HepG2 (cell line): ENCODE measurements at regions of chr7 and their contacts with region 1.

Region 1: DNA sequence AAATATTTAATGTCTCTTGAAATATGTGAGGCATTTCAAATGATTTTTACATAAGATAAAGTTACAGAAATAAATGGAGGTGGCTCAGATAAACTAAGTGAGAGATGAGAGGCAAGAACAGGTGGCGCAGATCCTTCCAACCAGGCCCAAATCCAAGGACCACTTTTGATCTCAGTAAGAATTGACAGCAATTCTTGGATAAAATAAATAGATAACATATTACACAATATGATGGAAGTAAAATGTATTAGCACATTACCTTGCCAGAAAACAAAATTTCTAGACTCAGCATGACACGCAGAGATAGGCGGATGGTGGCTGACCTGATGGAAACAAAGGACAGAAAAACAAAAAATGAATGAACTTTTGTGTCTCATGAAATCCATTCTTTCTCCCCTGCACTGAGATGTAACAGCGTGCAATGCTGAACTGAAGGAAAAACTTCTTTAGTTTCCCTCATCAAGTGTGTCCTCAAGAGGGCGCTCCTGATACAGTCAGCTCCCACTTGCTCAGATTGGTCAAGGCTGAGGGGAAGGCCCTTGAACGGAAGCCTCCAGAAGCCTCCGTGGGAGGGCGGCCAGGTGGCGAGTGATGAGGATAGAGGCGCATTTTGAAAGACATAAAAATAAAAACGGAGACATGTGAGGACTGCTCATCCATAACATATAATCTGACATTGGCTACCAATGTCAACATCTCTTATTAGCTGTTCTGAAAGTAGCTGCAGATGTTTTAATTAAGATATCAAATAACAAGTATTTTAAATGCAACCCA is 62.8 kb upstream of the GSDME start:
- DNase-seq: peak; percentile 74
- ATAC-seq: peak; percentile 94
- H3K4me3 ChIP-seq: no peak overlapping the region
- H3K27ac ChIP-seq: no peak overlapping the region
- H3K4me1 ChIP-seq: peaks cover 23% of the 10 kb centered on the region
- H3K27me3 ChIP-seq: no peaks in the 10 kb centered on the region
- CTCF ChIP-seq: peak; percentile 92
- EP300 ChIP-seq: no peak
- POLR2A ChIP-seq: no peak
- RAD21 ChIP-seq: peak; percentile 80

Region 2: GRCh38 chr7:24858108-24858977 is 38.2 kb after region 1 on chr7:
- CTCF ChIA-PET with region 1: interaction called, 7 read pairs
- POLR2A ChIA-PET with region 1: no interaction called
- in situ Hi-C with region 1: no loop called
- intact Hi-C with region 1: loop called (anchors 1 kb)
- DNase-seq: peak; percentile 53
- ATAC-seq: peak; percentile 83
- H3K4me3 ChIP-seq: no peak overlapping the region
- H3K27ac ChIP-seq: peak overlapping the region; percentile 29
- H3K4me1 ChIP-seq: peaks cover 17% of the 10 kb centered on the region
- H3K27me3 ChIP-seq: no peaks in the 10 kb centered on the region
- CTCF ChIP-seq: peak; percentile 58
- EP300 ChIP-seq: no peak
- POLR2A ChIP-seq: no peak
- RAD21 ChIP-seq: no peak

Region 3: DNA sequence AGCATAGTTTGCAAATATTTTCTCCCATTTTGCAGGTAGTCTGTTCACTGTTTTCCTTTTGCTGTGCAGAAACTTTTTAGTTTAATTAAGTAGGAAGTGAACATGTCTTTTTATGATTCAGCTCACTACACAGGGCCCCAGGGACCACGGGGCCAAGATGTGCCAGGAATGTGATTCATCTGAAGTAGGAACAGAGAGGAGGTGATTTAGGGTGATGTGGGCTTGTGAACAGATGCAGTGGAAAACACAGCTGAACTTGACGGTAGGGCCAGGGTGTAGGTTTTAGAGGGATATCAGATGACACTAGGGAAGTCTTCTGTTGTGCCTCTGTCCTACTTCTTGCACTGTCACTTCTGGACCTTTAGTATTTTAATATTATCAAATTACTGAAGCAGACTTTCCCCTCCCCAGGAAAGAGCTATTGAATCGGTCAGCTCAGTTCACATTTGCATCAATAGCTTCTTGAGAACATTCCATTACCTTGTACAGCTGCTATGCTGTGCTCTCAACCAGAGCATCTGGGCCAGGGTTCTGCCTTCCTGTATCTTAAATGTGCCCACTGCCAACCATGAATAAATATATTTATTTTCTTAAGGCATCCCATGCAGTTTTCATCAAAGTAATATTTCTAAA is 63.0 kb after region 1 on chr7:
- CTCF ChIA-PET with region 1: interaction called, 19 read pairs
- POLR2A ChIA-PET with region 1: no interaction called
- in situ Hi-C with region 1: loop called (anchors 5 kb)
- intact Hi-C with region 1: loop called (anchors 1 kb)
- DNase-seq: no peak
- ATAC-seq: no peak
- H3K4me3 ChIP-seq: no peak overlapping the region
- H3K27ac ChIP-seq: no peak overlapping the region
- H3K4me1 ChIP-seq: no peaks in the 10 kb centered on the region
- H3K27me3 ChIP-seq: no peaks in the 10 kb centered on the region
- CTCF ChIP-seq: no peak
- EP300 ChIP-seq: no peak
- POLR2A ChIP-seq: no peak
- RAD21 ChIP-seq: no peak

Region 4: GRCh38 chr7:24926623-24927524 is 106.8 kb after region 1 on chr7:
- CTCF ChIA-PET with region 1: no interaction called
- POLR2A ChIA-PET with region 1: no interaction called
- in situ Hi-C with region 1: no loop called
- intact Hi-C with region 1: no loop called
- DNase-seq: no peak
- ATAC-seq: no peak
- H3K4me3 ChIP-seq: no peak overlapping the region
- H3K27ac ChIP-seq: no peak overlapping the region
- H3K4me1 ChIP-seq: peaks cover 19% of the 10 kb centered on the region
- H3K27me3 ChIP-seq: no peaks in the 10 kb centered on the region
- CTCF ChIP-seq: no peak
- EP300 ChIP-seq: no peak
- POLR2A ChIP-seq: no peak
- RAD21 ChIP-seq: no peak

Region 5: GRCh38 chr7:24971333-24972165 is 151.4 kb after region 1 on chr7:
- CTCF ChIA-PET with region 1: no interaction called
- POLR2A ChIA-PET with region 1: no interaction called
- in situ Hi-C with region 1: no loop called
- intact Hi-C with region 1: loop called (anchors 1 kb)
- DNase-seq: peak; percentile 80
- ATAC-seq: peak; percentile 95
- H3K4me3 ChIP-seq: no peak overlapping the region
- H3K27ac ChIP-seq: peak overlapping the region; percentile 60
- H3K4me1 ChIP-seq: peaks cover 72% of the 10 kb centered on the region
- H3K27me3 ChIP-seq: no peaks in the 10 kb centered on the region
- CTCF ChIP-seq: no peak
- EP300 ChIP-seq: peak in 1 of 2 experiments; percentile 23; a peak in 1 of 4 replicates
- POLR2A ChIP-seq: no peak
- RAD21 ChIP-seq: no peak

Region 6: DNA sequence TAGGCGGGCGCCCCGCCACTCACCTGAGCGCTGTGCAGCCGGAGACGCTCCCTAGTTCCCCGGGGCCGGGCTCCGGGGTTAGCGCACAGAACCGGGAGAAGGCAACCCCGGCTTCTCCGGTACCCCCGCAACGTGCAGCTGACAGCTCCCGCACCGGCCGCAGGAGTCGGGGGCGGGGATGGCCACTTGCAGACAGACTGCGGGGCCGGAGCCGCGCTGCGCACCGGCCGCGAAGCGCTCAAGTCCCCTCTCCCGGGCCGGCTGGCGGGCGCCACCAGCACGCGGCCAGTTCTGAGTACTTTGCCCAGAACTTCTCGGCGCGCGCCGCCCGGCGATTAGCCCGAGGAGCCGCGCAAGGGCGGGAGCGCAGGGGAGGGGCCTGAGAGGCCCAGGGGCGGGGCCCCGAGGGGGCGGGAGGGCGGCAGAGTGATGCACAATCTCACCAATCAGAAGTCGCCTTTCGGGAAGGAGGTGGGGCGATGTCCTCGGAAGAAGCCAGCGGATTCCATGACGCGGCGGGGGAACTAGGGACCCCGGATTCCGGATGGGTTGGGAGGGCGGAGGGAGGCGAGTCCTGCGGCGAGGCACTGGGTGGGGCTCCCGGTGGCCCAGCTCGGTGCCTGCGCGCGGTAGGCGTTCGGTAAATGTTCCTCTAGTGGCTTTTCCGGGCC is 159.9 kb after region 1 on chr7 and contains the start of gene OSBPL3:
- CTCF ChIA-PET with region 1: interaction called, 3 read pairs
- POLR2A ChIA-PET with region 1: interaction called, 6 read pairs
- in situ Hi-C with region 1: loop called (anchors 5 kb)
- intact Hi-C with region 1: loop called (anchors 1 kb)
- DNase-seq: peak; percentile 91
- ATAC-seq: peak; percentile 84
- H3K4me3 ChIP-seq: peak within 1 kb of the TSS; percentile 78 to 89 (median 87)
- H3K27ac ChIP-seq: peak within 1 kb of the TSS; percentile 94
- H3K4me1 ChIP-seq: peaks cover 82% of the 10 kb centered on the region
- H3K27me3 ChIP-seq: no peaks in the 10 kb centered on the region; a peak in 1 of 5 replicates
- CTCF ChIP-seq: peak; percentile 46
- EP300 ChIP-seq: no peak
- POLR2A ChIP-seq: peak; percentile 72 to 81
- RAD21 ChIP-seq: no peak; the same call in 1 of the 2 replicates
- total RNA-seq, gene OSBPL3: 26.4 and 28.9 TPM in 2 replicates

Region 7: GRCh38 chr7:25069900-25070443 is 249.9 kb after region 1 on chr7:
- CTCF ChIA-PET with region 1: interaction called, 26 read pairs
- POLR2A ChIA-PET with region 1: no interaction called
- in situ Hi-C with region 1: no loop called
- intact Hi-C with region 1: loop called (anchors 1 kb)
- DNase-seq: peak; percentile 64
- ATAC-seq: peak; percentile 68
- H3K4me3 ChIP-seq: peak overlapping the region; percentile 18 to 48 (median 36); a peak in 4 of 6 replicates
- H3K27ac ChIP-seq: no peak overlapping the region
- H3K4me1 ChIP-seq: peaks cover 33% of the 10 kb centered on the region
- H3K27me3 ChIP-seq: no peaks in the 10 kb centered on the region
- CTCF ChIP-seq: peak; percentile 79
- EP300 ChIP-seq: no peak
- POLR2A ChIP-seq: no peak
- RAD21 ChIP-seq: peak; percentile 44; the same call in 1 of the 2 replicates

Region 8: DNA sequence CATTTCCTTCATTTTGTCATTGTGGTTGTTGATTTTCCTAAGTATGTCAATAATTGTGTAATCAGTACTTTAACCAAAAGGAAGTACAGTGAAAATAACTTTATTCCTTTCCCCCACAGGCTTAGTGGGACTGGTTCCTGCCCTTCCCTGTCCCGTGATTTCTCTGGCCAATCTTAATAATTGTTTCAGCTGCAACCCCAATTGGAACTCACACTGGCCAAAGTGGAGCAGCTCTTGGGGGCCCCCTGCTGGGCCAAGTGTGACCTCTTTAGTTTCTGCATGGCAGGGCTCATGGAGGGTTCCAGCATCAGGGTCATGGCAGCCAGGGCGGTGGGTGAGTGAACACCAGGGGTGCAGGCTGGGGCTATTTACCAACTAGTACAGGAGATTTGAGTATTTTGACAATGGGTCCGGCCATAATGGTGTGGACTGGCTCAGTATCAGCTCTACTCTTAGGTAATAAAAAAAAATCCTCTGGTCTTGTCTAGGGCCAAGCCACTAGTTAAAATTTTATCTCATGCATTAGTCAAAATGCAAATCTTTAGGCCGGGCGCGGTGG is 273.2 kb after region 1 on chr7:
- CTCF ChIA-PET with region 1: interaction called, 23 read pairs
- POLR2A ChIA-PET with region 1: no interaction called
- in situ Hi-C with region 1: loop called (anchors 5 kb)
- intact Hi-C with region 1: no loop called
- DNase-seq: peak; percentile 70
- ATAC-seq: peak; percentile 91
- H3K4me3 ChIP-seq: no peak overlapping the region
- H3K27ac ChIP-seq: no peak overlapping the region
- H3K4me1 ChIP-seq: peaks cover 56% of the 10 kb centered on the region
- H3K27me3 ChIP-seq: no peaks in the 10 kb centered on the region
- CTCF ChIP-seq: peak; percentile 83
- EP300 ChIP-seq: no peak
- POLR2A ChIP-seq: no peak
- RAD21 ChIP-seq: peak; percentile 65